ENCODE measurements at regions of chr22 and their contacts with region 1.

Region 1: DNA sequence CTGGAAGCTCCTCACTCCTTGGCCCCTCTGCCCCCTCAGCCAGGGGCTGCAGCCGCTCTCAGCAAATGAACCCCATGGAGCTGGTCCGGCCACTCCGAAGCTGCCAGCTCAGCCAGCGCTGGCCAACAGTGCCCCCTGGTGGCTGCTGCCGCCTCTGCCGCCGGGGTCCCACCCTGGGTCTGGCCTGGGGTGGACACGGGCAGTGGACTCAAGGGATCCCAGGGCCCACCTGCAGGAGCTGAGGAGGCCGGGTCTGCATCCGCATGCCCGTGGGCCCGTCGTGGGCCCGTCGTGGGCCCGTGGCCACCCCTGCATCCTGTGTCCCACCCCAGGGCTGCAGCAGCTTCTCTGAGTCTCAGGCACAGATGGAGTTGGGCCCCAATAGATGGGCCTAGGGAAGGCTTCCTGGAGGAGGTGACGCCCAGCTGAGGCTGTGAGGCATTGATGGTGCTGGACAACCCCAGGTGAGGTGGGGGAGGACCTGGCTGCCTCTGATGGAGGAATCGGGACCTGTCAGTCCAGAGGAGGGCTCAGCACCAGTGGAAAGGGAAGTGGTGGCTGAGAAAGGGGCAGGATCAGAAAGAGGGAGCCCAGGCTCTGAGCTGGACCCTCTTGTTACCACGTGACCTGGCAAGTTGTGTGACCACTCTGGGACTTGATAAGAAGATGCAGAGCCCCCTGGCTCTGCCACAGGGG is 522.3 kb downstream of the BRD1 start:
- DNase-seq: peak; percentile 25 to 84
- H3K4me3 ChIP-seq: no peak overlapping the region
- H3K4me1 ChIP-seq: no peaks in the 10 kb centered on the region
- H3K27me3 ChIP-seq: peaks cover 4% of the 10 kb centered on the region; the same call in 1 of the 2 replicates

Region 2: DNA sequence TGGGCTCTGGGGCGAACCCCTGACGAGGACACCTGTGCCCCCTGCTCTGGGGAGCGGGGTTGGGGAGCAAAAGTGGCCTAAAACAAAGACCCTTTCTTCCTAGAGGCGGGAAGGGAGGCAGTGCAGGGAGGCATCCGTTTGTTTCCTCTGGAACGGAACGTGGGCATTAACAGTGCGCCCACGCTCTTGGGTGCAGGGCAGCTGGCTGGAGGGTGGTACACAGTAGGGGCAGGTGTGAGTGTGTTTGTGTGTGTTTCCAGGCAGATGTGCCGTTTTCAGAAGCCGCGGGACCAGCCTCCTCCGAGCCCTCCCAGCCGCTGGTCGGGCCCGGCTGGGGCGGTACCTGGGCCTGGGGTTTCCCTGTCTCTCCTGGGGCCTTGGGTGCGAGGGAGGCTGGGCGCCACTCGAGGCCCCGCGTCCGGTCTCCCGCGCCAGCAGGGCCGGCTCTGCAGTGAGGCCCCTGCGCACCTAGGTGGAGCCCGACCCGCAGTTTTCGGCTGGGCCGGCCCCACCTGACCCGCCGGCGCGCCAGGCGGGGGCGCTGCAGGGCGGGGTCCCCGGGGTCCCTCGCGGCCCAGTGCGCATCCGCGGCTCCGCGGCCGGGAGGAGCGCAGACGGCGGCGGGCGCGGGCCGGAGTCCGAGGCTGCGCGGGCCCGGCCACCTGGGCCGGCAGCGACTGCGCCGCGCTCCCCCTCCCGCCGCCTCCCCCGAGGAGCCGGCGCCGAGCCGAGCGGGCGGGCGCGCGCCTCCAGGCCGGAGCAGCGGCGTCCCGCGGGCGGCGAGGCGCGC is 730.4 kb before region 1 on chr22:
- in situ Hi-C with region 1: loop called (anchors 10 kb)
- DNase-seq: peak; percentile 22 to 66
- H3K4me3 ChIP-seq: no peak overlapping the region
- H3K4me1 ChIP-seq: no peaks in the 10 kb centered on the region
- H3K27me3 ChIP-seq: no peaks in the 10 kb centered on the region

Region 3: GRCh38 chr22:49046546-49047361 is 258.6 kb before region 1 on chr22:
- in situ Hi-C with region 1: loop called (anchors 10 kb)
- DNase-seq: peak; percentile 35 to 72
- H3K4me3 ChIP-seq: no peak overlapping the region
- H3K4me1 ChIP-seq: no peaks in the 10 kb centered on the region
- H3K27me3 ChIP-seq: no peaks in the 10 kb centered on the region

Measured in HAP-1 (cell line).